Activated T-helper 2 cell treated with anti-CD3 and anti-CD28 coated beads, Interferon-gamma antibody, Interleukin-2, Interleukin-4, amounts not matched to agents 10 μg/mL and 5 μg/mL and 100 μg/mL, durations not matched to agents 14 hours and 24 hours and 36 hours (primary cell): ENCODE measurements at regions of chr17 and their contacts with region 1.

Region 1: GRCh38 chr17:63773381-63774140 is at the start of gene CCDC47:
- DNase-seq: peak; percentile 99
- H3K4me3 Mint-ChIP-seq: peak within 1 kb of the TSS; percentile 92
- H3K27ac Mint-ChIP-seq: peak within 1 kb of the TSS; percentile 99
- H3K4me1 Mint-ChIP-seq: peaks cover 36% of the 10 kb centered on the region
- H3K27me3 Mint-ChIP-seq: no peaks in the 10 kb centered on the region
- total RNA-seq, gene CCDC47: 70.0 and 73.7 TPM in 2 replicates

Region 2: DNA sequence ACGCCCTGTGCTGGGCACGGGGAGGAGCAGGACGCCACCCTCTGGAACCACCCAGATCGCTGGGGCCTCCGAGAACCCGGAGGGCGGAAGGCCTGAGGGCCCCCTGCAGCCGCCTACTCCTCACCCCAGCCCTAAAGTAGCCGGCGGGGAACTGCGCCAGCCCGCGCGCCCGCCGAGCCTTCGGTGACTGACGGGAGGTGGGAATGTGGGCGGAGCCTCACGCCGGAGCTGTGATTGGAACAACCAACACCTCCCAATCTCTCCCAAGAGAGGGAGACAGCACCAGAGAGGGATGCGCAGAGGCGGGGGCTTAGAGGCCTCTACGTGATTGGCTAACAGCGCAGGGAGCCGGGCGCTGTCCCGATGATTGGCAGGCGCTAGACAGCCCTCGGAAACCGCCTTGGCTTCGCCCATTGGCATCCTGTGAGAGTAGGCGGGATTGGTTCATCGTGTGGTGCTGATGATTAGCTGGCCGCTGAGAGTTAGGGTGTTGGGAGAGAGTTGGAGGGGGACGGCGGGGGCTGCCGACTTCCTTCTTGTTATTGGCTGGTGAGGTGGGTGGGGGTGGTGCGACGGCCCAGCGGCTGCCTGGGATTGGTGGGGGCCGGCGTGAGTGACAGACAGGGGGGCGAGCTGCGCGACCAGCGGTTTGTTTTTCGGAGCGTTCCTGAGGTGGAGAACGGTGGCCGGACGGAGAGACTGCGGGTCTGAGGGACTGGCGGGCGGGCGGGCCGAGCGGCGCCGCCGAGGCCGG is 151.6 kb before region 1 on chr17 and contains the start of gene MAP3K3:
- intact Hi-C with region 1: loop called (anchors 2 kb)
- DNase-seq: peak; percentile 98
- H3K4me3 Mint-ChIP-seq: peak within 1 kb of the TSS; percentile 99
- H3K27ac Mint-ChIP-seq: peak within 1 kb of the TSS; percentile 92
- H3K4me1 Mint-ChIP-seq: peaks cover 31% of the 10 kb centered on the region
- H3K27me3 Mint-ChIP-seq: peaks cover 13% of the 10 kb centered on the region
- total RNA-seq, gene MAP3K3: 27.9 and 28.7 TPM in 2 replicates

Region 3: DNA sequence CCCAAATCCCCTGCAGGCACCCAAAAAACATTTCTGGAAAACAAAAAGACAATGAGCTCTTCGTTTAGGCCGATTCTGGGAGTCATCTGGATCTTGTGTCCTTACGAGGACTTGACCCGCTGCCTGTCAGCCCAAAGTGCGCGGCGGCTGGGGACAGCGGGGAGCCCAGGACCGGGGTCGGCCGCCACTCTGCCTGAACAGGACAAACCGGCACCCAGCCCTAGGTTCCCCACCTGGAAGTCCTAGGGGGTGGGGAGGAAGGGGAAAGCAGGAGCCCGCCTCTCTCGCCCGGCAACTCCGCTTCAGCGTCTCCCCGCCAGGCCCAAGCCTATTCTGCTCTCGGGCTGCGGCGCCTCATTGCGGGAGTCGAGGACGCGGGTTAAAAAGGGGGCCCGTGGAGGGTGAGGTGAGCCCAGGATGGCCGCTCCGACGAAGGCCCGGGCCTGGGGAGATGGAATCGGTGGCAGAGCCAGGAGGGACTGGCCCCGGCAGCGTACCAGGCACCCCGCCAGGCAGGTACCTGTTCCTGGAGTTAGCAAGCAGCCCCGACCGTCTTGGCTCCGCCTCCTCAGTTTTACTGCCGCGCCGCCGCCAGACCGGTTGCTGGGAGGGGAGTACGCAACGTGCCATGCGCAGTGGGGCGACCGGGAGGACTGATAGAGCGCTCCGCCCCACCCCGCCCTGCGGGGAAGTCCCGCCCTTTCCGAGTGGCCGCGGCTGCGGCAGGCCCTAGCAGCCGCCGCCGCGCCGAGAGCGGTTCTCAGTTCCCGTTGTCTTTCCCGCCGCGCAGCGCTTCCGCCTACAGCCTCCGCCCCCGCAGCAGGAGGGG is 32.1 kb before region 1 on chr17 and contains the start of gene STRADA:
- intact Hi-C with region 1: loop called (anchors 1 kb)
- DNase-seq: peak; percentile 99
- H3K4me3 Mint-ChIP-seq: peak within 1 kb of the TSS; percentile 98
- H3K27ac Mint-ChIP-seq: peak within 1 kb of the TSS; percentile 96
- H3K4me1 Mint-ChIP-seq: peaks cover 20% of the 10 kb centered on the region
- H3K27me3 Mint-ChIP-seq: no peaks in the 10 kb centered on the region
- total RNA-seq, gene STRADA: 54.0 and 57.4 TPM in 2 replicates

Region 4: GRCh38 chr17:63785556-63785955 is 12.0 kb after region 1 on chr17:
- intact Hi-C with region 1: no loop called
- DNase-seq: no peak
- H3K4me3 Mint-ChIP-seq: no peak overlapping the region
- H3K27ac Mint-ChIP-seq: no peak overlapping the region
- H3K4me1 Mint-ChIP-seq: peaks cover 30% of the 10 kb centered on the region
- H3K27me3 Mint-ChIP-seq: no peaks in the 10 kb centered on the region

Region 5: DNA sequence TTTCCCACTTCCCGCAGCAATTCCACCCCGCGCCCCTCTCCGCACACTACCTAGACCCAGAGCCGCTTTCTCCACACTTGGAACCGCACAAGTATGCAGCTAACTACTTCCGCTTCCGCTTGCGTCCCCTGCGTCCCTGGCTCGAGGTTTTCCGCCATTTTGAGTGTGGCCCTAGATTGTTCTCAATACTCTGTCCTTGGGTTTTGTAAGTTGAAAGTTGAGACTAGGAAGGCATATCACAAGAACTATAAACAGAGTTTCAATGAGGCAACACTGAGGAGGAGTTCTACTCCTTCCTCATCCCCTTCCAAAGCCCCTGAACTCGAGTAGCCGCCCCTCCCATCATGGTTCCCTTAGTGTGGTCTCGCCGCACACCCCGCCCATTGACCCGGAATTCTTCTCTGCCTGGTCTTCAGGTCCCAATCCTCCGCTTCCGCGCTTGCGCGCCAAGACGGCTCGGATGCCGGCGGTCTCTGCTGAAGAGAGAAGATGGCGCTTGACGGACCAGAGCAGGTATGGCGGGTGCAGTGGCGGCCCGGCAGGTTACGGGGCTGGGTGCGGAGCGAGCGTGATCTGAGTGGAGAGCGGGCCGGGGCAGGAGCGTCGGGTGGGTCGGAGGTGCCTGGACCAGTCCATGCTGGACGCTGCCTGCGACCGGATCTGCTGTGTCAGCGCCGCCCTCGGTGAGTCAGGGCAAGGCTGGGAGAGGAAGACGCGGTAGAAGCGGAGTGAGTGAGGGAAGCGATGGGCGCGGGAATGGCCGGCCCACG is 53.6 kb after region 1 on chr17 and contains the starts of genes FTSJ3 and PSMC5:
- intact Hi-C with region 1: loop called (anchors 1 kb)
- DNase-seq: peak; percentile 94
- H3K4me3 Mint-ChIP-seq: peak within 1 kb of the TSS; percentile 94
- H3K27ac Mint-ChIP-seq: peak within 1 kb of the TSS; percentile 99
- H3K4me1 Mint-ChIP-seq: peaks cover 56% of the 10 kb centered on the region
- H3K27me3 Mint-ChIP-seq: no peaks in the 10 kb centered on the region
- total RNA-seq, gene FTSJ3: 75.0 and 80.7 TPM in 2 replicates
- total RNA-seq, gene PSMC5: 185 and 204 TPM in 2 replicates